GM10248 (cell line): ENCODE measurements at regions of chr6 and their contacts with region 1.

Region 1: GRCh38 chr6:43228951-43229802 is at the start of gene DNPH1:
- DNase-seq: peak; percentile 87
- CTCF ChIP-seq: peak; percentile 93

Region 2: GRCh38 chr6:43174263-43175112 is 54.7 kb before region 1 on chr6:
- CTCF ChIA-PET with region 1: interaction called, 11 read pairs
- POLR2A ChIA-PET with region 1: interaction called, 3 read pairs
- DNase-seq: peak; percentile 98
- CTCF ChIP-seq: no peak

Region 3: GRCh38 chr6:43240950-43241349 is 11.8 kb after region 1 on chr6:
- CTCF ChIA-PET with region 1: interaction called, 32 read pairs
- POLR2A ChIA-PET with region 1: no interaction called
- DNase-seq: no peak
- CTCF ChIP-seq: no peak

Region 4: DNA sequence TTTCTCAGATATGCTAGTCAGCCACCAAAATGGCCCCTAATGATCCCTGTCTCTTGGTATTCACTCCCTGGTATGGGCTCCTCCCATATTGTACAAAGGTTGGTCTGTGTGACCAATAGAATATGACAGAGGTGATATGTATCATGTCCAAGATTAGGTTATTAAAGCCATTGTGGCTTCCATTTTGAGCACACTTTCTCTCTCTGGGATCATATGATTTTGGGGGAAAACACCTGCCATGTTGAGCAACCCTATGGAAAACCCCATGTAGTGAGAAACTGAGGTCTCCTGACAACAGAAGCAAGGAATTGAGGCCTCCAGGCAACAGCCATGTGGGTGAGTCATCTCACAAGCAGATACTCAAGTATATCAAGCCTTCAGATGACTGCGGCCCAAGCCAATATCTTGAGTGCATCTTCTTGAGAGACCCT is 147.4 kb after region 1 on chr6:
- CTCF ChIA-PET with region 1: interaction called, 11 read pairs
- POLR2A ChIA-PET with region 1: no interaction called
- DNase-seq: no peak
- CTCF ChIP-seq: no peak

Region 5: DNA sequence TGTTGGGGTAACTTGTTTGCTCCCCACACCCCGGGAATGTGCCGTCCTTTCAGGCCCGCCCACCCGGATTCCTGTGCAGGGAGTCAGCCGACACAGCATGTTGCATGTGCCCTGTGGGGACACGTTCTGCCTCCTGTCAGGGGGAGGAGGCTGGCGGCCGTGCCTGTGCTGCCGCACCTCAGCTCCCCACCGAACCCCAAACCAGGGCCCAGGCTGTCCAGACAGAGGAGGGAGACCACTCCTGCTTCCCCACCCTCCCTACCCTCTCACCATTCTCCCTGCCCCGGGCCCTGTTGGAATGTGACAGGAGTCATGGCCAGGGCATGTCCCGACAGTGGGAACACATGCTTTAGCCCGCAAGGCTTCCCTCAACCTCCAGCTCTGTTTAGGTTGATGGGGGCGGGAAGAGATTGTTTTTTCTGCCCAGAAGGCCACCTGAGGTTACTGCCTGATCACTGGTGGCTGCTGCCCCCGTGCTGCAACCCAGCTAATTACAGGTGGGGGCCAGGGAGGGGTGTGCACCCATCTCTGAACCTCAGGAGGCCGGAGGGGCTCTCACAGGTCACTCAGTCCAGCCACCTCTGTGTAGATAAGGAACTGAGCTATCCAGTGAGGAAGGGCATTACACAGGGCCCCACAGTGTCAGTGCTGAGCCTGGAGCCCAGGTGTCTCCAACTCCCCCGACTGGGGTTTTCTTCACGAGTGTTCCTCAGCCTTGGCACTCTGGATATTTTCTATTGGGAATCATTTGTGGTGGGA is 267.4 kb after region 1 on chr6:
- CTCF ChIA-PET with region 1: interaction called, 11 read pairs
- POLR2A ChIA-PET with region 1: no interaction called
- DNase-seq: no peak
- CTCF ChIP-seq: peak; percentile 63